ENCODE measurements at regions of chr3 and their contacts with region 1.

Region 1: GRCh38 chr3:39809181-39809994 is at the start of gene MYRIP:
- DNase-seq: peak; percentile 65 to 87
- H3K4me3 ChIP-seq: peak within 1 kb of the TSS; percentile 65
- H3K4me3 Mint-ChIP-seq: peak within 1 kb of the TSS; percentile 67
- H3K27ac Mint-ChIP-seq: no peak within 1 kb of the TSS
- H3K4me1 ChIP-seq: peaks cover 7% of the 10 kb centered on the region; the same call in 1 of the 2 replicates
- H3K4me1 Mint-ChIP-seq: no peaks in the 10 kb centered on the region
- H3K27me3 ChIP-seq: peaks cover 4% of the 10 kb centered on the region
- H3K27me3 Mint-ChIP-seq: peaks cover 31% of the 10 kb centered on the region
- CTCF ChIP-seq: no peak
- total RNA-seq, gene MYRIP: 0.59 and 0.77 TPM in 2 replicates

Region 2: GRCh38 chr3:39707314-39707909 is 102.0 kb before region 1 on chr3:
- CTCF ChIA-PET with region 1: no interaction called
- POLR2A ChIA-PET with region 1: no interaction called
- intact Hi-C with region 1: loop called (anchors 5 kb)
- DNase-seq: peak in 1 of 2 experiments; percentile 42
- H3K4me3 ChIP-seq: no peak overlapping the region
- H3K4me3 Mint-ChIP-seq: no peak overlapping the region
- H3K27ac Mint-ChIP-seq: no peak overlapping the region
- H3K4me1 ChIP-seq: no peaks in the 10 kb centered on the region
- H3K4me1 Mint-ChIP-seq: no peaks in the 10 kb centered on the region
- H3K27me3 ChIP-seq: no peaks in the 10 kb centered on the region
- H3K27me3 Mint-ChIP-seq: peaks cover 10% of the 10 kb centered on the region
- CTCF ChIP-seq: peak; percentile 57 to 64

Region 3: GRCh38 chr3:39762537-39763070 is 46.8 kb before region 1 on chr3:
- CTCF ChIA-PET with region 1: no interaction called
- POLR2A ChIA-PET with region 1: no interaction called
- intact Hi-C with region 1: no loop called
- DNase-seq: no peak
- H3K4me3 ChIP-seq: no peak overlapping the region
- H3K4me3 Mint-ChIP-seq: no peak overlapping the region
- H3K27ac Mint-ChIP-seq: no peak overlapping the region
- H3K4me1 ChIP-seq: no peaks in the 10 kb centered on the region
- H3K4me1 Mint-ChIP-seq: no peaks in the 10 kb centered on the region
- H3K27me3 ChIP-seq: no peaks in the 10 kb centered on the region
- H3K27me3 Mint-ChIP-seq: peaks cover 7% of the 10 kb centered on the region
- CTCF ChIP-seq: no peak

Region 4: GRCh38 chr3:39981547-39982184 is 172.3 kb after region 1 on chr3:
- CTCF ChIA-PET with region 1: no interaction called
- POLR2A ChIA-PET with region 1: no interaction called
- intact Hi-C with region 1: loop called (anchors 5 kb)
- DNase-seq: no peak
- H3K4me3 ChIP-seq: no peak overlapping the region
- H3K4me3 Mint-ChIP-seq: no peak overlapping the region
- H3K27ac Mint-ChIP-seq: no peak overlapping the region
- H3K4me1 ChIP-seq: peaks cover 25% of the 10 kb centered on the region
- H3K4me1 Mint-ChIP-seq: peaks cover 35% of the 10 kb centered on the region
- H3K27me3 ChIP-seq: no peaks in the 10 kb centered on the region
- H3K27me3 Mint-ChIP-seq: no peaks in the 10 kb centered on the region
- CTCF ChIP-seq: no peak

Region 5: DNA sequence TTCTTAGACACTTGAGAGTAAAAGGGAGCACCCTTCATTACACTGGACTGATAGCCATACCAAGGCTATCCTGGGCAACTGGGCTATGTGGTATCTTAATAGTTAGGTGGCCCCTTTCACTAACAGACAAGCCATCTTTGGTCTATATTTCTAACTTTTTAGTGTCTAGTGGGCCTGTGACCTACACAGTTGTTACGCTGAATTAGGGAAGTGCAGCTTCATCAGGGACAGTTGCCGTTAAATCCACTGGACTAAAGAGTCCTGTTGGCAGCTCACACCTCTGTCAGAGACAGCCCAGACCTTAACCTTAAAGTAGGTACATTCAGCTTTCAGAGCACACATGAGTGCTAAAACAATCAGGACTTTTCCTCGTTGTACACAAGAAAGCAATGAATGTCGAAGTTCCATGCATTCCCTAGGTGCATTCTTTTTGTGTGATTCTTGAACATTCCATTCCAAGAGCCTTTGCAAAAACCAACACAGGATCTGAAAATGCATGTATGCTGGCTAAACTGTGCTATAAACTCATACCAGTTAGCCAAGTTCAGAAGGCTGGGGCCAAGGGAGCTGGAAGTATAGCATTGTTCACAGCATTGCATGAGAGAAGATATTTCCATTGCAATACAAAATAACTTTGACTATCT is 269.9 kb after region 1 on chr3:
- CTCF ChIA-PET with region 1: no interaction called
- POLR2A ChIA-PET with region 1: no interaction called
- intact Hi-C with region 1: loop called (anchors 10 kb)
- DNase-seq: peak in 1 of 2 experiments; percentile 34
- H3K4me3 ChIP-seq: no peak overlapping the region
- H3K4me3 Mint-ChIP-seq: no peak overlapping the region
- H3K27ac Mint-ChIP-seq: peak overlapping the region; percentile 73
- H3K4me1 ChIP-seq: peaks cover 14% of the 10 kb centered on the region
- H3K4me1 Mint-ChIP-seq: peaks cover 14% of the 10 kb centered on the region
- H3K27me3 ChIP-seq: no peaks in the 10 kb centered on the region
- H3K27me3 Mint-ChIP-seq: no peaks in the 10 kb centered on the region
- CTCF ChIP-seq: no peak